MCF 10A (cell line): ENCODE measurements at regions of chr11 and their contacts with region 1.

Region 1: GRCh38 chr11:43282607-43283440 is 29.0 kb upstream of the API5 start:
- DNase-seq: peak; percentile 48
- H3K4me3 Mint-ChIP-seq: no peak overlapping the region
- H3K27ac Mint-ChIP-seq: no peak overlapping the region
- H3K4me1 Mint-ChIP-seq: peaks cover 7% of the 10 kb centered on the region
- H3K27me3 Mint-ChIP-seq: no peaks in the 10 kb centered on the region
- CTCF ChIP-seq: peak; percentile 91

Region 2: DNA sequence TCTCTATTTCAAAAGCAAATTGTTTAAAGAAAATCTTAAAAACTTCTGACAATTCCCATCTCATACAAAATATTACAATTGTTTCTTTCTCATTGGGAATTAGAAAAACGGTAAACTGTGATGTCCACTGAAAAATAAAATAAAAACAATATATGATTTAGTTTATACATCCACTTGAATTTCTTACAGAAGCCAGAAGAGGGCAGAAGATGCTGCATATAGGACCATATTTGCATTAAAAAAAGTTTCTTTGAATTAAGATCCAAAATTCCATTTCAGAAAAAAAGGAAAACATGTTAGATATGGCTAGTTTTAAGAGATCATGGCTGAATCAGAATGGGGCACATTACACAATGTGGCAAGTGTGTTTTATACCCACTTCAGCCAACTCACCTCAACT is 1784.1 kb before region 1 on chr11:
- CTCF ChIA-PET with region 1: interaction called, 11 read pairs
- POLR2A ChIA-PET with region 1: no interaction called
- intact Hi-C with region 1: loop called (anchors 2 kb)
- DNase-seq: peak; percentile 5
- H3K4me3 Mint-ChIP-seq: no peak overlapping the region
- H3K27ac Mint-ChIP-seq: no peak overlapping the region
- H3K4me1 Mint-ChIP-seq: no peaks in the 10 kb centered on the region
- H3K27me3 Mint-ChIP-seq: no peaks in the 10 kb centered on the region
- CTCF ChIP-seq: peak; percentile 55

Region 3: GRCh38 chr11:42536611-42537360 is 746.0 kb before region 1 on chr11:
- CTCF ChIA-PET with region 1: interaction called, 10 read pairs
- POLR2A ChIA-PET with region 1: no interaction called
- intact Hi-C with region 1: no loop called
- DNase-seq: no peak
- H3K4me3 Mint-ChIP-seq: no peak overlapping the region
- H3K27ac Mint-ChIP-seq: no peak overlapping the region
- H3K4me1 Mint-ChIP-seq: no peaks in the 10 kb centered on the region
- H3K27me3 Mint-ChIP-seq: no peaks in the 10 kb centered on the region
- CTCF ChIP-seq: no peak

Region 4: DNA sequence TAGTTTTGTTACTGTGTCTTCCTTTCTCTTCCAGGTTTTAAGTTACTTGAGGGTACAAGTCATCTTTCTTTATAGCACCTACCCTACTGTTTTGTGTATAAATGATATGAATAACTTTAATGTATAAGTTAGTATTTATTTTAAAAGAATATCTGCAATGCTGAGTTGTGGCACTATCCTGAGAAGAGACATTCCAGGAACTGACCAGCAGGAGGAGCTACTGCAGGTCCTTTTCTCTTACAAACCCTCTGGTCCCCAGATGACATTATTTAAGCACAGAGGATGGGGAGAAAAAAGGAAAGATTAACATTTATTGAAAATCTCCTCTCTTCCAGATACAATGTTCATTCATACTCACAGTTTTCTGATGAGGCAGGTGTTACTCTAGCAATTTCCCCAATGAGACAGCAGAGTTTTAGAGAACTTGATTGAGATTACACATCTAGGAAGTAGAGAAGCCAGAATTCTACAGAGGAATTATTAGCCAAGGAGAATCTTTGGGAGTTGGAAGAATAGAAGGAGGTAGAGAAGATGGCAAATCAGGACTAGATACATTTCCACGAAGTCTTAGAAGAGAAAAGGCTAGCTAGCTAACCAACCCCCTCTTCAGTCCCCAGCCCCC is 512.3 kb before region 1 on chr11:
- CTCF ChIA-PET with region 1: interaction called, 20 read pairs
- POLR2A ChIA-PET with region 1: no interaction called
- intact Hi-C with region 1: loop called (anchors 1 kb)
- DNase-seq: no peak
- H3K4me3 Mint-ChIP-seq: no peak overlapping the region
- H3K27ac Mint-ChIP-seq: no peak overlapping the region
- H3K4me1 Mint-ChIP-seq: no peaks in the 10 kb centered on the region
- H3K27me3 Mint-ChIP-seq: no peaks in the 10 kb centered on the region
- CTCF ChIP-seq: peak; percentile 68

Region 5: DNA sequence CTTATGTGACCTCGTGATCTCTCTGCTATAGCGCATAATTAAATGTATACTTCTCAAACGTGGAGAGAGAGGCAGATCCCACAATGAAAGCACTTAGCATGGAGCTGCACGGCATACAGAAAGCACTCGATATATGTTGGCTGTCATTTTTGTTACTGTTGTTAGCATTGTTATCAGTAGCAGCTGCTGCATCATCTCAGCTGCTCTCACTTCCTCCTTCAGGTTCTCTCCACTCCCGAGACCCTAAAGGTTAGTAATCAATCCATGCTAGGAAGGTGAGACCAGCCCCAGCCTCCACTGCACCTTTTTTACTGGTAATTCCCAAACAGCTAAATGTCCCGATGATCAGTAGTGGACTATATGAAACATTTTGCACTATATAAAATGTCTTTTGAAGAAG is 15.6 kb after region 1 on chr11:
- CTCF ChIA-PET with region 1: interaction called, 36 read pairs
- POLR2A ChIA-PET with region 1: no interaction called
- intact Hi-C with region 1: no loop called
- DNase-seq: no peak
- H3K4me3 Mint-ChIP-seq: no peak overlapping the region
- H3K27ac Mint-ChIP-seq: no peak overlapping the region
- H3K4me1 Mint-ChIP-seq: no peaks in the 10 kb centered on the region
- H3K27me3 Mint-ChIP-seq: no peaks in the 10 kb centered on the region
- CTCF ChIP-seq: no peak

Region 6: DNA sequence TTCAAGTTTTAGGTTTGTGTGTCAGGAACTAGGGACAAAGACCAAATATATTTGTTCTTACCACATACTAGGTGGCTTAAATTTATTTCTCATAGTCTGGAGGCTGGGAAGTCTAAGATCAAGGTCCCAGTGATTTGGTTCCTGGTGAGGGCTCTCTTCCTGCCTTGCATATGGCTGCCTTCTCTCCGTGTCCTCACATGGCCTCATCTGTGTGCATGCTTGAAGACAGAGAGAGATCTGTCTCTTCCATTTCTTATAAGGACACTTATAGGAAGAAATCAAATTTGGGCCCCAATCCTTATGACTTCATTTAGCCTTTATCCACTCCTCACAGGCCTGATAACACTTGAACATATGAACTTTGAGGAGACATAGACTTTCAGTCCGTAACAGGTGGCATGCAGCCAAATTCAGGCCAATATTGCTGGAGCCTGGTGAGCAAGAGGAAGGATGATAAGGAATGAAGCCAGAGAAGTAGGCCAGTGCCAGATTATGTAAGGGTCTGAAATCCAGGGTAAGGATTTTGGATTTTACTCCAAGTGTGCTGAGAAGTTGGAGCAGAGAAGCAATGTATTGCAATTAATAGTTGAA is 111.0 kb after region 1 on chr11:
- CTCF ChIA-PET with region 1: no interaction called
- POLR2A ChIA-PET with region 1: no interaction called
- intact Hi-C with region 1: no loop called
- DNase-seq: no peak
- H3K4me3 Mint-ChIP-seq: no peak overlapping the region
- H3K27ac Mint-ChIP-seq: no peak overlapping the region
- H3K4me1 Mint-ChIP-seq: no peaks in the 10 kb centered on the region
- H3K27me3 Mint-ChIP-seq: no peaks in the 10 kb centered on the region
- CTCF ChIP-seq: no peak